Activated naive CD8-positive, alpha-beta T cell treated with anti-CD3 and anti-CD28 coated beads, Interleukin-2, amount 10 ng/mL, durations not matched to agents 7 days and 5 days (primary cell): ENCODE measurements at regions of chr19 and their contacts with region 1.

Region 1: GRCh38 chr19:58182989-58183816 is at the start of gene ZNF274:
- DNase-seq: peak; percentile 97
- ATAC-seq: peak; percentile 90
- H3K4me3 Mint-ChIP-seq: peak within 1 kb of the TSS; percentile 92
- H3K27ac Mint-ChIP-seq: peak within 1 kb of the TSS; percentile 100
- H3K4me1 Mint-ChIP-seq: peaks cover 14% of the 10 kb centered on the region
- H3K27me3 Mint-ChIP-seq: no peaks in the 10 kb centered on the region
- total RNA-seq, gene ZNF274: 54.6 to 56.9 TPM

Region 2: DNA sequence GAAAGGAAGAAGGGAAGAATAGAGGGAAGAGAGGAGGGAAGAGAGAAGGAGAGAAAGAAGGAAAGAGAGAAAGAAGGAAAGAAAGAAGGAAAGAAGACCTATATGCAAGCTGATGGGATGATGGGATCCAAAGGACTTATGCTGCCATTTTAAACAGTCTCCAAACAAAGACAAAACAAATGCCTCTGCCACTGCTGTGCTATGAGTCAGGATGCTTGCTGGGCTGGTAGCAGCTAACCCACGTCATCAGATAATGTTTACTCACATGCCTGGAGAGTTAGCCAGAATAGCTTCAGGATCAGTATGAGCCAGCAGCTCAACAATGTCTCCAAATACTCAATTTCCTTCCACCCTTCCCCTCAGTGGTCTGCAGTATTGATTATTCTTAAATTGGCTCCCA is 12.3 kb before region 1 on chr19:
- POLR2A ChIA-PET with region 1: no interaction called
- DNase-seq: no peak
- ATAC-seq: no peak
- H3K4me3 Mint-ChIP-seq: no peak overlapping the region
- H3K27ac Mint-ChIP-seq: no peak overlapping the region
- H3K4me1 Mint-ChIP-seq: no peaks in the 10 kb centered on the region
- H3K27me3 Mint-ChIP-seq: no peaks in the 10 kb centered on the region

Region 3: DNA sequence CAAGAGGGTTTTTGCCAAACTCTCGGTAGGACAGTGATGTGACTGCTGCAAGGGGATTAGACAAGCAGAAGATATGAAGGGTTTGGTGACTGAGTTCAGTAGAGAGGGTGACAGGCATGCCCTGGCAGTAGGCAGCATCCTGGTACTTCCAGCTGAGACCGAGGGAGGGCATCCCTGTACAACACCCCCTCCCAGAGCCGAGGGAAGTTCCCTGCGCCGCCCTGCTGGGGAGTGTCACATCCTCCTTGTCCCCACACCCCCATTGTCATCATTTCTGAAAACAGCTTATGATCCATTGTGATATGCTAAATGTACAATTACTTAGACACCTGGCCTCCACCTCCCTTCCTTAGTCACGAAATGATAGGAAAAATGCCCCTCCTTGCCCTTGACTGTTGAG is 60.1 kb after region 1 on chr19:
- POLR2A ChIA-PET with region 1: no interaction called
- DNase-seq: no peak
- ATAC-seq: no peak
- H3K4me3 Mint-ChIP-seq: no peak overlapping the region
- H3K27ac Mint-ChIP-seq: no peak overlapping the region
- H3K4me1 Mint-ChIP-seq: no peaks in the 10 kb centered on the region
- H3K27me3 Mint-ChIP-seq: no peaks in the 10 kb centered on the region

Region 4: DNA sequence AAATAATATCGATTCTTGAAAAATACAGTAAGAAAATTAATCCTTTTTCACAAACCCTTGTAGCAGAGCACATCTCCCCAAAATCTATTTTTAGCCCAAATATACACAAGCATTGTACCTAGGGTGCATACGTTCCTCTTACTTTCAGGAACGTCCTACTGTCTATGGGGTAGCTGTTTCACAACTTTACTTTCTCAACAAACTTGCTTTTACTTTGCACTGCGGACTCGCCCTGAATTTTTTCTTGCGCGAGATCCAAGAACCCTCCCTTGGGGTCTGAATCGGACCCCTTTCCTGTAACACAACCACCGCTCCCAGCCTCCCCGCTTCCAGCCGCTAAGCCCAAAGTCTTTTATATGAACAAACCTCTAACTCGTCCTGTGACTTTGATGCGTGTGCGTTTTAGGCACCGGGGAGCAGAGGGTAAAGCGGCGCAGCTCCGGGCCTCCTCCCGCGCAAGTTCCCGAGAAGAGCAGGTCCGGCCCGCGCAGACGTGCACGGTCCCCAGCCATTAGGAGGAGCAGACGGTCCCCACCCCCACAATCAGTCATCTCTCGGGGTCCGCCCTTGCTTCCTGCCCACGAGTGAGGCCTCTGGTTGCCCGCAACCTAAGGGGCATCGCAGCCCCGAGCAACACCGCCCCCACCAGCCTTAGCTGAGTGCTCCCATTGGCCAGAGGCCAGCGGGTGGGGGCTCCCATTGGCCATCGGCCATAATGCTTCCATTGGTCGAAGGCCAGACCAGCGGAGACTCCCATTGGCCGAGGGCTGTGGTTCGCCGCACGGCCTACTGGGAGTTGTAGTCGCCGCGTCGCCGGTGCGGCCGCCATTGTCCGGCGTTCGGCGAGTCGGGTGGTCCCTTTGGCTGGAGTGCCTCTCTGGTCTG is 95.2 kb after region 1 on chr19 and contains the start of gene ZNF8:
- POLR2A ChIA-PET with region 1: interaction called, 14 read pairs
- DNase-seq: peak; percentile 94
- ATAC-seq: peak; percentile 99
- H3K4me3 Mint-ChIP-seq: peak within 1 kb of the TSS; percentile 91
- H3K27ac Mint-ChIP-seq: peak within 1 kb of the TSS; percentile 93
- H3K4me1 Mint-ChIP-seq: peaks cover 19% of the 10 kb centered on the region
- H3K27me3 Mint-ChIP-seq: no peaks in the 10 kb centered on the region
- total RNA-seq, gene ZNF8: 8.6 to 8.9 TPM